HepG2 (cell line): ENCODE measurements at regions of chr9 and their contacts with region 1.

Region 1: GRCh38 chr9:7536310-7536939 is 263.2 kb downstream of the DMAC1 start:
- DNase-seq: peak; percentile 45
- ATAC-seq: peak; percentile 96
- H3K4me3 ChIP-seq: no peak overlapping the region
- H3K27ac ChIP-seq: no peak overlapping the region
- H3K4me1 ChIP-seq: no peaks in the 10 kb centered on the region
- H3K27me3 ChIP-seq: no peaks in the 10 kb centered on the region
- CTCF ChIP-seq: peak; percentile 84
- EP300 ChIP-seq: no peak
- POLR2A ChIP-seq: no peak
- RAD21 ChIP-seq: 0 out of 2 replicates have a peak, but pooled peaks have one; percentile 28

Region 2: DNA sequence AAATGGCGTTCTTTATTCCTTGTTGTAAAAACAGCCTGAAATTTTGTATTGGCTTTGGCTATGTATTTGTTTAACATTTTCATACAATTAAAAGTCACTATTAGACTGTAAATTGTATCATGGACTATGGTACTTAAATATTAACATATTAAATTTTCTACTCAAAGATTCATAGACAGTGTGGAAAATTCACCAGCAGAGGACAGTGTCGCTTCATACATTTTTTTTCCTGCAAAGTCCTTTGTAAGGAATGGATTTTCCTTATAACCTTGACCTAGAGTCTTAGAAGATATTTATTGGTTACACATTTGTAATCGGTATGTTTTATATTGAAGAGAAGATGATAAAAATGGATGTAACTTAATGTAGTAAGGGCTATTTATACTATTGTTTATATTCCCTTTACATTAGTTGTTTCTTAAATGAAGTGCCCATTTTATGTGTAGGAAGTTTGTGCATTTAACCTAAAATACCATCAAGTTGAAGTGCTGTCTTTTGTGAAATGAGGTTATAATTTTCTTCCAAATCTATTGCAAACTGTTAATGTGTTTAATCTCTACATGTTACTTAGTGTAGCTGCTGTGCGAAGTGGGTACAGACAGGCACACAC is 628.5 kb before region 1 on chr9:
- CTCF ChIA-PET with region 1: no interaction called
- POLR2A ChIA-PET with region 1: no interaction called
- in situ Hi-C with region 1: loop called (anchors 25 kb)
- intact Hi-C with region 1: loop called (anchors 5 kb)
- DNase-seq: peak; percentile 38
- ATAC-seq: peak; percentile 38; the same call in 1 of the 3 replicates
- H3K4me3 ChIP-seq: no peak overlapping the region
- H3K27ac ChIP-seq: peak overlapping the region; percentile 13
- H3K4me1 ChIP-seq: peaks cover 55% of the 10 kb centered on the region
- H3K27me3 ChIP-seq: no peaks in the 10 kb centered on the region
- CTCF ChIP-seq: peak; percentile 50
- EP300 ChIP-seq: no peak
- POLR2A ChIP-seq: no peak
- RAD21 ChIP-seq: no peak

Region 3: DNA sequence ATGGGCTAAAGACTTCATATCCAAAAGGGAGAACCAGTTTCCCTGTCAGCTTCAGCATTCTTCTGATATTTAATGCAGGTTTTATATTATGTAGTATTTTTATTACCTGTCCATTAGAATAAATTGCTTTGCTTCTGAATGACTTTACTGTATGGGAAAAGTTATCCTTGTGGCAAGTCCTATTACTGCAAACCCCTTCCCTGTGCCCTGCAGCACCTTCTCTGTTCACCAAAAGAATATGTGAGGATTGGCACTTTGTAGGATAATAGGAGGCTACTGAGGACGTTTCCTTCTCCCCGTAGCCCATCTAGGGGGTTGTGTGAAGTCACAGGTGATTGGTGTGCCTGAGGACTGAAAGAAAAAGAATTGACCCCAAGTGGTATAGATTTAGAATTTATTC is 482.5 kb before region 1 on chr9:
- CTCF ChIA-PET with region 1: interaction called, 3 read pairs
- POLR2A ChIA-PET with region 1: no interaction called
- in situ Hi-C with region 1: no loop called
- intact Hi-C with region 1: loop called (anchors 2 kb)
- DNase-seq: no peak
- ATAC-seq: no peak
- H3K4me3 ChIP-seq: no peak overlapping the region
- H3K27ac ChIP-seq: no peak overlapping the region
- H3K4me1 ChIP-seq: no peaks in the 10 kb centered on the region
- H3K27me3 ChIP-seq: no peaks in the 10 kb centered on the region
- CTCF ChIP-seq: no peak
- EP300 ChIP-seq: no peak
- POLR2A ChIP-seq: no peak
- RAD21 ChIP-seq: no peak

Region 4: DNA sequence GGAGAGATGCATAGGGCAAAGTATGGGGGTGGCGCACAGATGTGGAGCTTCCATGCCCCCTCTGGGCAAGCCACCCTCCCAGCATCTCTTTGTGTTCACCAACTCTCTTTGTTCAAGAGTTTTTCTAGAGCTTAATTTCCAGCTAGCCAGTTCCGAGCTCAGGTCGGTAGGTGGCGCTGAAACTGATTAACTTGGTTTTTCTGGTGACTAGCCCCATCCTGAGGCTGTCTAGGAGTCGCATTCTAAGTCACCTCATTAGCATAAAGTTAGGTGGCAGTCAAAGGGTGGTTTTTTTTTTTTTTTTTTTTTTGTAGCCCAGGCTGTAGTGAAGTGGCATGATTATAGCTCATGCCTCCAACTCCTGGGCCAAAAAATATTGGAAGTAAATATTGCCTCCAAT is 302.3 kb before region 1 on chr9:
- CTCF ChIA-PET with region 1: no interaction called
- POLR2A ChIA-PET with region 1: no interaction called
- in situ Hi-C with region 1: no loop called
- intact Hi-C with region 1: loop called (anchors 1 kb)
- DNase-seq: peak; percentile 52
- ATAC-seq: peak; percentile 93
- H3K4me3 ChIP-seq: no peak overlapping the region
- H3K27ac ChIP-seq: no peak overlapping the region
- H3K4me1 ChIP-seq: no peaks in the 10 kb centered on the region
- H3K27me3 ChIP-seq: peaks cover 4 to 13% of the 10 kb centered on the region in 2 experiments; a peak in 3 of 5 replicates
- CTCF ChIP-seq: peak; percentile 68
- EP300 ChIP-seq: no peak
- POLR2A ChIP-seq: no peak
- RAD21 ChIP-seq: no peak

Region 5: DNA sequence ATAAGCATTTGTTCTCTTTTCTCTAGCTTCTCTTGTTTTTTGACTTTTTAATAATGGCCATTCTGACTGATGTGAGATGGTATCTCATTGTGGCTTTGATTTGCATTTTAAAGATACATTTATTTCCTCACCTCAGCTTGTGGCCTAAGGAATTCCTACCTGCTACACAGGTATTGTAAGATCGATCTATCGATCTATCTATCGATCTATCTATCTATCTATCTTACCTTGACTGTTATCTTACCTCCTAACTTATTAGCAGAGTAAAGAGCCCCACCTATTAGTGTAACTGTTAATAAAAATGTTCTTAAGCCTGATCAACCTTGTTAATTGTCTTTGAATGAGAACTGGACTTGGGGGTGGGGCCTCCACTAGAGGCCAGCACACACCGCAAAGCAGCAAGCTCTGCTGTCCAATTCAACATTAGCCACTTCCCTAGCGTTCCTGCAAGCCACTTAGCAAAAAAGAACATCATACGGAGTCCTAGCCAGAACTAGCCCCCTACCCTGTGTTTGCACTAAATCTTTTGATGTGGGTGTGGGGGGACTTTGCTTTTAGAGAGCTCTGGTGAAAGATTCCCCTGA is 262.9 kb before region 1 on chr9:
- CTCF ChIA-PET with region 1: no interaction called
- POLR2A ChIA-PET with region 1: no interaction called
- in situ Hi-C with region 1: no loop called
- intact Hi-C with region 1: loop called (anchors 1 kb)
- DNase-seq: no peak
- ATAC-seq: peak; percentile 73
- H3K4me3 ChIP-seq: no peak overlapping the region
- H3K27ac ChIP-seq: no peak overlapping the region
- H3K4me1 ChIP-seq: no peaks in the 10 kb centered on the region
- H3K27me3 ChIP-seq: peaks cover 0 to 6% of the 10 kb centered on the region in 2 experiments; a peak in 2 of 5 replicates
- CTCF ChIP-seq: peak; percentile 51
- EP300 ChIP-seq: no peak
- POLR2A ChIP-seq: no peak
- RAD21 ChIP-seq: no peak

Region 6: GRCh38 chr9:7452378-7452777 is 84.0 kb before region 1 on chr9:
- CTCF ChIA-PET with region 1: no interaction called
- POLR2A ChIA-PET with region 1: no interaction called
- in situ Hi-C with region 1: no loop called
- intact Hi-C with region 1: no loop called
- DNase-seq: no peak
- ATAC-seq: no peak
- H3K4me3 ChIP-seq: no peak overlapping the region
- H3K27ac ChIP-seq: no peak overlapping the region
- H3K4me1 ChIP-seq: no peaks in the 10 kb centered on the region
- H3K27me3 ChIP-seq: no peaks in the 10 kb centered on the region
- CTCF ChIP-seq: no peak
- EP300 ChIP-seq: no peak
- POLR2A ChIP-seq: no peak
- RAD21 ChIP-seq: no peak

Region 7: DNA sequence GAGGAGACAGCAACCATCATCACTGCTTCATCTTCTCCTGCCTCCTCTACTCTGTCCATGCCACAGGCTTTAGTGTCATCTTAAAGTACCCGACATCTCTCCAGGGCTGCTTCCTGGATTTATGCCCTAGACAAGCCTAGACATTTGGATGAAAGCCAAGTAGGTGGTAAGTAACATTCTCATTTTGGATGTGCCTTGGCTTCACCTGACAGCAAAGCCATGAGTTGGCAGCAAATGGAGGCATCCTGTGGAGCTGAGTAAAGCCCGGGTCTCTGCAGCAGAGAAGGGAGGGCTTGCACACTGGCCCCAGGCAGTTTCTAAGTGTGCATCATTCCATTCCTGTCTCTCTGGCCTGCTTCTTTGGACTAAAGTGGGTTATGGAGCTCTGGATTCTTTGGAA is 35.9 kb before region 1 on chr9:
- CTCF ChIA-PET with region 1: no interaction called
- POLR2A ChIA-PET with region 1: no interaction called
- in situ Hi-C with region 1: no loop called
- intact Hi-C with region 1: no loop called
- DNase-seq: no peak
- ATAC-seq: no peak
- H3K4me3 ChIP-seq: no peak overlapping the region
- H3K27ac ChIP-seq: no peak overlapping the region
- H3K4me1 ChIP-seq: no peaks in the 10 kb centered on the region
- H3K27me3 ChIP-seq: no peaks in the 10 kb centered on the region
- CTCF ChIP-seq: no peak
- EP300 ChIP-seq: no peak
- POLR2A ChIP-seq: no peak
- RAD21 ChIP-seq: no peak

Region 8: GRCh38 chr9:7729371-7730163 is 193.1 kb after region 1 on chr9:
- CTCF ChIA-PET with region 1: no interaction called
- POLR2A ChIA-PET with region 1: no interaction called
- in situ Hi-C with region 1: no loop called
- intact Hi-C with region 1: no loop called
- DNase-seq: no peak
- ATAC-seq: no peak
- H3K4me3 ChIP-seq: no peak overlapping the region
- H3K27ac ChIP-seq: no peak overlapping the region
- H3K4me1 ChIP-seq: no peaks in the 10 kb centered on the region
- H3K27me3 ChIP-seq: no peaks in the 10 kb centered on the region
- CTCF ChIP-seq: no peak
- EP300 ChIP-seq: no peak
- POLR2A ChIP-seq: no peak
- RAD21 ChIP-seq: no peak

Region 9: DNA sequence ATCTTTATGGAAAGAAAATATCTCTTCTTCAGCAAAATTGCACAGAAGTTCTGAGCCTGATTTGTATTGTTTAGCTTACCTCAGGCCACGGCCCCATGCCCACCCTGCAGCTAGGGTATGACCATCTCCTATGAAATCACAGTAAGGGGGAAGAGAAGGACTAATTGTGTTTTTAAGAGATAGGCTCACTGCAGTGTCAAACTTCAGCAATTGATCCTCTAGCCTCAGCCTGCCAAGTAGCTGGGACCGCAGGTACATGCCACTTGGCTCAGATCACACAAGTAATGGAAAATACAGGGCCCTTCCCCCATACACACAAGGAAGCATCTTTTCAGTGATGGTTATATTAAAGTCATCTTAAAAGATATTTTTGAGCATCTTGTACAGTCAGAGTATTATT is 203.2 kb after region 1 on chr9:
- CTCF ChIA-PET with region 1: no interaction called
- POLR2A ChIA-PET with region 1: no interaction called
- in situ Hi-C with region 1: no loop called
- intact Hi-C with region 1: no loop called
- DNase-seq: no peak
- ATAC-seq: no peak
- H3K4me3 ChIP-seq: no peak overlapping the region
- H3K27ac ChIP-seq: no peak overlapping the region
- H3K4me1 ChIP-seq: no peaks in the 10 kb centered on the region
- H3K27me3 ChIP-seq: no peaks in the 10 kb centered on the region
- CTCF ChIP-seq: no peak
- EP300 ChIP-seq: no peak
- POLR2A ChIP-seq: no peak
- RAD21 ChIP-seq: no peak